ENCODE measurements at regions of chr5 and their contacts with region 1.

Region 1: GRCh38 chr5:179724163-179724562 is 8.5 kb upstream of the MAML1 start:
- DNase-seq: no peak
- H3K27ac ChIP-seq: no peak overlapping the region
- CTCF ChIP-seq: no peak

Region 2: GRCh38 chr5:179747811-179748210 is 23.6 kb after region 1 on chr5:
- CTCF ChIA-PET with region 1: no interaction called
- POLR2A ChIA-PET with region 1: interaction called, 10 read pairs
- DNase-seq: no peak
- H3K27ac ChIP-seq: no peak overlapping the region
- CTCF ChIP-seq: no peak

Measured in RWPE1 (cell line).